Activated naive CD4-positive, alpha-beta T cell treated with anti-CD3 and anti-CD28 coated beads, Interleukin-2, amount 10 ng/mL, durations not matched to agents 7 days and 5 days (primary cell): ENCODE measurements at regions of chr3 and their contacts with region 1.

Region 1: GRCh38 chr3:179015551-179016020 is 56.0 kb downstream of the ZMAT3 start:
- DNase-seq: peak; percentile 74
- H3K4me3 Mint-ChIP-seq: no peak overlapping the region
- H3K27ac Mint-ChIP-seq: peak overlapping the region; percentile 47
- H3K4me1 Mint-ChIP-seq: peaks cover 48% of the 10 kb centered on the region
- H3K27me3 Mint-ChIP-seq: no peaks in the 10 kb centered on the region

Region 2: GRCh38 chr3:179000659-179001058 is 14.9 kb before region 1 on chr3:
- CTCF ChIA-PET with region 1: no interaction called
- DNase-seq: no peak
- H3K4me3 Mint-ChIP-seq: no peak overlapping the region
- H3K27ac Mint-ChIP-seq: no peak overlapping the region
- H3K4me1 Mint-ChIP-seq: no peaks in the 10 kb centered on the region
- H3K27me3 Mint-ChIP-seq: no peaks in the 10 kb centered on the region

Region 3: DNA sequence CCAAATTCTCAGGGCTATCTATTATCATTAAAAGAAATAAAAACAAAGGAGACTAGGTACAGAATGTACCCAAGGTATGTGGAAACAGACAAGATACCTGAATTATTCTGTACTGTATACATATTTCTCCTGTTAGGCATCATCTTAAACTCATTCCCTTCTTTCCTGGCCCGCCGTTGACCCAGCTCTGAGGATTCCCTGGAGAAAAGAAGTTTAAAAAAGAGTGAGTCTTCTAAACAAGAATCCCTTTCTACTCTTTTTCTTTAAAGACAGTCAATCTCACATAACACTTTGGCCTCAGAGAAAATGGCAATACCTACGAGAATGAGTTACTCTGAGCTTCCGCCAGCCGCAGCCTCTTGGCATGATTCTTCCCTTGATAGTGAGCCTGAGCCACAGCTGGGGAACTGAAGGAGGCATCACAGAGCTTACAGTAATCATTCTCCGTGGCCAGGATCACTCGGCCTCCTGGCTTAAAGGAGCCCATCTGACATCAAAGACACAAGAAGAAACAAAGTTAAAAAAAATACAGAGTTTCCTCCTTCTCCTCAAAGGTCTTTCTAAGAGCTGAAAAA is 11.8 kb after region 1 on chr3:
- CTCF ChIA-PET with region 1: interaction called, 12 read pairs
- DNase-seq: peak; percentile 45
- H3K4me3 Mint-ChIP-seq: no peak overlapping the region
- H3K27ac Mint-ChIP-seq: peak overlapping the region; percentile 86
- H3K4me1 Mint-ChIP-seq: peaks cover 23% of the 10 kb centered on the region
- H3K27me3 Mint-ChIP-seq: no peaks in the 10 kb centered on the region

Region 4: DNA sequence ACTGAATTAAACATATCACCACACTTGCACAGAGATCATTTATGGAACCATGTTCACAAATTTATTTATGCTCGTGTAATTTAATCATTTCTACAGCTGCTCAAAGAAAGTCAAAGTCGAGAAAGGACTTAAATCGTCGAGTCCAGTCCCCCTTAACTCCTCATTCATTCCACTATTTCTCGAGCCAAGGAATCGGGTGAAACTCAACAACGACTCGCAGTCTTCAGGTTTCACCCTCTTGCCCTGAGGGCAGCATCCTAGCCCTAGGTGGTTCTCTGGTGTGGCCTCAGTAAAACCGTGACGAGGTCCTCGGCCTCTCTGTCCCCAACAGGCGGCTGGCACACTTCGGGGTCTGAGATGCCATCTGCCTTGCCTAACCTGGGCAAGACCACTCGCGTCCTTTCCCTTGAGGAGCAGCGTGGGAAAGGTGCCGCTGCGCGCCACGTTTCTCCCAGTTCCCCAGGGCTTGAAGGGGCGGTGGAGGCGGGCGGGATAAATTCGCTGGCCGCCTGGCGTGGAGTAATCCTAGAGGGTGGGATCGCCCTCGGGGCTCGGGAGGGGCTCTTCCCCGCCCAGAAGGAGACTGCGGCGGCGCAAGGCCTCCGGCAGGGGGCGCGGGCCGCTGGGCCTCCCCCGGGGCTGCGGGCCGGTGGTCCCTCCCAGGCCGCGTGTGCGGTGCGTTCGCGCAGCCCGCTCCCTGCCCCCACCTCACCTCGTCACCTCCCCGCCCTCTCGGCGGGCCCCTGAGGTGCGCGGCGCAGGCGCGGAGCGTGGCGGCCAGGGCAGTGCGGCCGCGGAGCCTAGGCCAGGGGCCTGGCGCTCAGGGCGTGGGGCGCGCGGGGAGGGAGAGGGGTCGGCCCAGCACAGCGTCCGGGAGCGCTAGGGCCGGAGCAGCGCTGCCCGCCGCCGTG is 307.0 kb after region 1 on chr3 and contains the start of gene ZNF639:
- CTCF ChIA-PET with region 1: interaction called, 18 read pairs
- DNase-seq: peak; percentile 87
- H3K4me3 Mint-ChIP-seq: peak within 1 kb of the TSS; percentile 85
- H3K27ac Mint-ChIP-seq: peak within 1 kb of the TSS; percentile 94
- H3K4me1 Mint-ChIP-seq: peaks cover 35% of the 10 kb centered on the region
- H3K27me3 Mint-ChIP-seq: peaks cover 15% of the 10 kb centered on the region